Heart left ventricle (tissue), 16 donors: ENCODE measurements at regions of chr17 and their contacts with region 1.

Region 1: GRCh38 chr17:36999471-36999870 is 50.7 kb downstream of the AATF start:
- DNase-seq: no peak
- ATAC-seq: no peak
- H3K4me3 ChIP-seq: no peak overlapping the region
- H3K27ac ChIP-seq: no peak overlapping the region
- H3K4me1 ChIP-seq: no peaks in the 10 kb centered on the region
- H3K27me3 ChIP-seq: no peaks in the 10 kb centered on the region
- CTCF ChIP-seq: no peak
- POLR2A ChIP-seq: no peak

Region 2: DNA sequence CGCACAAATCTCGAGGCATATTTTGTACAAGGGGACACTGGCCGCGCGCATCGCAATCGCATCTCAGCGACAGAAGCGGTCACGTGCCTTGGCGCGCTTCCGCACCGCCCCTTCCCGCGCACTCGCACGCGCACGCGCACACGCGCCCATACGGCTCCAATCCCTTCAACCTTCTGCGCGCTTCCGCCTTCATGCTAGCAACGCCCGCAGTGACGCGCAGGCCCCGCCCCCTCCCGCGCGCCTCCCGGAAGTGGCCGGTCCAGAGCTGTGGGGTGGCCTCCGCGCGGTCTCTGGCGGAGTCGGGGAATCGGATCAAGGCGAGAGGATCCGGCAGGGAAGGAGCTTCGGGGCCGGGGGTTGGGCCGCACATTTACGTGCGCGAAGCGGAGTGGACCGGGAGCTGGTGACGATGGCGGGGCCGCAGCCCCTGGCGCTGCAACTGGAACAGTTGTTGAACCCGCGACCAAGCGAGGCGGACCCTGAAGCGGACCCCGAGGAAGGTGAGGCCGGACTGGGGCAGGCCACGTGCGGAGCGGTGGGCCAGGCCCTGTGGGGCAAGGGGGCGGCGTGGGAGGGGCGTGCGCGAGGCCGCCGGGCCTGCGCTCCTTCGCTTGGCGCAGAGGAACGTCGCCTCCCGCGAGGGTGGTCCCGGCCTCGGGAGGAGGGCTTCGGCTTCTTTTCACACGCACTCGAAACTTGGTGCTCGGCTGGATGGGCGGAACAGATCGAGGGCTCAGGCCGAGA is 50.6 kb before region 1 on chr17 and contains the start of gene AATF:
- intact Hi-C with region 1: no loop called
- DNase-seq: peak; percentile 96 to 97 (median 97)
- ATAC-seq: peak; percentile 99 to 100 (median 100)
- H3K4me3 ChIP-seq: peak within 1 kb of the TSS; percentile 63 to 99 (median 86)
- H3K27ac ChIP-seq: peak within 1 kb of the TSS; percentile 33 to 95 (median 84)
- H3K4me1 ChIP-seq: peaks cover 0 to 28% (median 18%) of the 10 kb centered on the region in 12 donors
- H3K27me3 ChIP-seq: peaks cover 24 to 41% (median 37%) of the 10 kb centered on the region in 9 donors
- CTCF ChIP-seq: no peak
- POLR2A ChIP-seq: peak in 1 of 2 donors; percentile 68
- total RNA-seq, gene AATF: 15.2 to 34.8 (median 28.9) TPM

Region 3: DNA sequence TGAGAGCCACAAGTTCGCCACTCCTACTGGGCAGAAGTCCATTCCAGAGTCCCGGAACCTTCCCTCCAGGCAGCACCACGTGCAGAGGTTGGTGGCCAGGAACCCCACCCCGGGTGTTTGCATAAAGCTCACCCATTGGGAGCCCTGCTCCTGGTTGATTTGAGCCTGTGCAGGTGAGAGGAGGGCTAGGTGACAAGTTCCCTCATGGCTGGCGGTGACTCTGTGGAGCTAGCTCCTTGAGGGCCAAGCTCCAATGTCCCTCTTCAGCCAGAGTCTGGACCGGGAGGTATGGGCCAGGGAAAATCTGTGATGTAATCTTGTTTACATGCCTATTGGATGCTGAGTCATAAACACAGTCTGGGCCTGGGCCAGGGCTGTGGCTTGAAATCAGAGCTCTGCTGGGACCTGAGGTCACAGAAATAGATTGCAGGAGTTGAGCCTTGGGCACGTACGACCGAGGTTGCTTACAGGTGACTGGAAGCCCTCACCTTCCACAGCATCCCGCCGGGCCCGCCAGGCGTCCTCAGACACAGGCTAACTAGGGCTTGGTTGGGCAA is 68.2 kb after region 1 on chr17:
- intact Hi-C with region 1: loop called in 1 of 10 experiments (anchors 10 kb)
- DNase-seq: peak in 1 of 5 donors; percentile 47
- ATAC-seq: peak in 3 of 4 donors; percentile 11 to 69 (median 50)
- H3K4me3 ChIP-seq: no peak overlapping the region
- H3K27ac ChIP-seq: no peak overlapping the region
- H3K4me1 ChIP-seq: no peaks in the 10 kb centered on the region
- H3K27me3 ChIP-seq: peaks cover 0 to 46% (median 11%) of the 10 kb centered on the region in 9 donors
- CTCF ChIP-seq: no peak
- POLR2A ChIP-seq: no peak